Prostate gland (tissue), 2 donors: ENCODE measurements at regions of chr2 and their contacts with region 1.

Region 1: DNA sequence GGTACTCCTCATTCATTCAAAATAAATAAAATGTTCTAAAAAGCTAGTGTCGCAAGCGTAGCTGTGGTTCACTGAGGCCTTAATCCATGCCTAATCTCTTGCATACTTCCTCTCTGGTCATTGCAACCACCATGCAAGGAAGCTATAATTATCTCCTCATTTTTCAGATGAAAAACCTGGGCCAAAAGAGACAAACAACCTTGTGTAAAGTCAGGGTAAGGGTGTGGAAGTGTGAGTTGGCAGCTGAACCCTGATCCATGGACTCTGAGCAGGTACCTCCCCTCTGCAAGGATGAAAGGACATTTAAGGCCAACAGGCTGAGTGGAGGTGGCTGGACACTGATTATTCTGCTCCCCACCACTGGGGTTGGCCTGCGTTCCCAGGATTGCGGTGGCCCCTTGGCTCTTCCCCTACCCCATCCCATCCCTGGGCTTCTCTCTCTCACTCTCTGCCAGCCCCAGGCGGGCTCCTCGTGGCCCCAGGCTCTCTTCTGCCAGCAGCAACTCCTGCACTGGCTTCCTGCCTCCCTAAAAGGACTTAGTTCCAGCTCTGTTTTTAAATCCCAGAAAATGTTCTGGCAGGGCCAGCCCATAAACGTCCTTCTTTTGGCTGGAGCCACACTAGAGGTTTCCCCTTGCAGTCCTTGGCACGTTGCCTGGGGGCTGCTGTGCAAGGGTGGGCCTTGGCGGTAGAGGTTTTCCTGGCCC is 72.0 kb upstream of the AFF3 start:
- DNase-seq: no peak
- H3K4me3 ChIP-seq: no peak overlapping the region
- H3K27ac ChIP-seq: peak overlapping the region; percentile 28 to 44
- H3K4me1 ChIP-seq: peaks cover 5% of the 10 kb centered on the region
- H3K27me3 ChIP-seq: no peaks in the 10 kb centered on the region
- CTCF ChIP-seq: no peak
- POLR2A ChIP-seq: no peak

Region 2: GRCh38 chr2:99659874-99660273 is 554.5 kb before region 1 on chr2:
- intact Hi-C with region 1: loop called (anchors 5 kb)
- DNase-seq: no peak
- H3K4me3 ChIP-seq: no peak overlapping the region
- H3K27ac ChIP-seq: no peak overlapping the region
- H3K4me1 ChIP-seq: peaks cover 11% of the 10 kb centered on the region
- H3K27me3 ChIP-seq: no peaks in the 10 kb centered on the region
- CTCF ChIP-seq: no peak
- POLR2A ChIP-seq: no peak

Region 3: GRCh38 chr2:100013892-100014677 is 200.3 kb before region 1 on chr2:
- intact Hi-C with region 1: no loop called
- DNase-seq: no peak
- H3K4me3 ChIP-seq: no peak overlapping the region
- H3K27ac ChIP-seq: no peak overlapping the region
- H3K4me1 ChIP-seq: no peaks in the 10 kb centered on the region
- H3K27me3 ChIP-seq: no peaks in the 10 kb centered on the region
- CTCF ChIP-seq: no peak
- POLR2A ChIP-seq: no peak

Region 4: GRCh38 chr2:100104718-100105677 is 109.4 kb before region 1 on chr2:
- intact Hi-C with region 1: loop called (anchors 5 kb)
- DNase-seq: no peak
- H3K4me3 ChIP-seq: peak overlapping the region; percentile 53 to 73
- H3K27ac ChIP-seq: peak overlapping the region; percentile 84 to 95
- H3K4me1 ChIP-seq: peaks cover 6% of the 10 kb centered on the region
- H3K27me3 ChIP-seq: no peaks in the 10 kb centered on the region
- CTCF ChIP-seq: no peak
- POLR2A ChIP-seq: no peak

Region 5: GRCh38 chr2:100350707-100351106 is 136.3 kb after region 1 on chr2:
- intact Hi-C with region 1: no loop called
- DNase-seq: no peak
- H3K4me3 ChIP-seq: no peak overlapping the region
- H3K27ac ChIP-seq: no peak overlapping the region
- H3K4me1 ChIP-seq: no peaks in the 10 kb centered on the region
- H3K27me3 ChIP-seq: no peaks in the 10 kb centered on the region
- CTCF ChIP-seq: no peak
- POLR2A ChIP-seq: no peak